ENCODE measurements at regions of chr12 and their contacts with region 1.

Region 1: DNA sequence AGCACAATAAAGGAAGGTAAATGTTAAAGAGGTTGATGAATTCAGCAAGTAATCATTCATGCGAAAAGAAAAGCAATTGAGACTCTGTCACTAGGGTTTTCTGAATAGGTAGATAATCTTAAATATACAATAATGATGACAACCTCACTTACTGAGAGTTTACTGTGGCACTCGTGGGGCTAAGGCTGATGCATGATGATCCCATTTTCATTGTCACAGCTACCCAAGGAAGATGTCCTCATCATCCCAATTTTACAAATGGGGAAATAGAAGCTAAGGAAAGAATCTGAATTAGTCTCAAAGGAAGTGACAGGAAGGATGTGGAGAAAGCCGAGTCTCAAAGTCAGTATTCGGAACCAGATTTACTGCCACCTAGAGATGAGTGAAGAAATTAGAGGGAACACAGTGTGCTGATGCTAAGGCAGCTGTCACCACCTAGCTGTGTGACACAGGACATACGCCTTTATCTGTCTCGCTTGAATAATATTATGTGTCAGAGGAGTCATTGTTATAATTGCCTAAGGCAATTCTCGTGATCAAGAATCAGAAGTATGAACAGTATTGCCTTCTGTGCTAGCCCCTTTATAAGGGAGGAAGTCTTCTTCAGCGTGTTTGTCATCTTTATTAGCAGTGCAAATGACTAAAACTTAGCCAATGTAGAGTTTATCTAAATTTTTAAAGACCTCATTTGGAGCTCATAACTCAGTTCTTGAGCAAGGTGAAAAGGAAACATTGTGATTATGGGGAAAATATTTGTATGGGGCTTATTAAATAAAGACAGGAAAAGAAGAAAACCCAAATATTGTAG is 63.2 kb downstream of the ERGIC2 start:
- DNase-seq: peak; percentile 68
- CTCF ChIP-seq: peak; percentile 86

Region 2: GRCh38 chr12:29073628-29074239 is 244.0 kb before region 1 on chr12:
- CTCF ChIA-PET with region 1: interaction called, 42 read pairs
- POLR2A ChIA-PET with region 1: no interaction called
- DNase-seq: peak; percentile 20
- CTCF ChIP-seq: peak; percentile 56

Region 3: DNA sequence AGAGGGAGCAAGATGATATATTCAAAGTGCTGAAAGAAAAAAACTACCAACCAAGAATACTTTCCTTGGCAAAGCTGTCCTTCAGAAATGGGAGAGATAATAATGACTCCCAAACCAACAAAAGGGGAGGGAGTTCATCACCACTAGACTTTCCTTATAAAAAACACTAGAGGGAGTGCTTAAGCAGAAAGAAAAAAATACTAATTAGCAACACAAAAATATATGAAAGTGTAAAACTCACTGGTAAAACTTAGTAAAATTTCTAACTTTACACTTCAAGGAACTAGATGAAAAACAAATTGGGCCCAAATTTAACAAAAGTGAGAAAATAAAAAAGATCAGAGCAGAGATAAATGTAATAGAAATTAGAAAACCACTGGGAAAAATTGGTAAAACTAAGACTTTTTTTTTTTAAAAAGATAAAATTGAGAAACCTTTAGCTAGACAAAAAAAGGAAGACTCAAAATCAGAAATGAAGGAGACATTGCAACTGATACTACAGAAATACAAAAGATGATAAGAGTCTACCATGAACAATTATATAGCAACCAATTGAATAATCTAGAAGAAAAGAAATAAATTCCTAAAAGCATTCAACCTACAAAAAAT is 229.0 kb before region 1 on chr12:
- CTCF ChIA-PET with region 1: interaction called, 14 read pairs
- POLR2A ChIA-PET with region 1: no interaction called
- DNase-seq: peak; percentile 21
- CTCF ChIP-seq: peak; percentile 35

Region 4: DNA sequence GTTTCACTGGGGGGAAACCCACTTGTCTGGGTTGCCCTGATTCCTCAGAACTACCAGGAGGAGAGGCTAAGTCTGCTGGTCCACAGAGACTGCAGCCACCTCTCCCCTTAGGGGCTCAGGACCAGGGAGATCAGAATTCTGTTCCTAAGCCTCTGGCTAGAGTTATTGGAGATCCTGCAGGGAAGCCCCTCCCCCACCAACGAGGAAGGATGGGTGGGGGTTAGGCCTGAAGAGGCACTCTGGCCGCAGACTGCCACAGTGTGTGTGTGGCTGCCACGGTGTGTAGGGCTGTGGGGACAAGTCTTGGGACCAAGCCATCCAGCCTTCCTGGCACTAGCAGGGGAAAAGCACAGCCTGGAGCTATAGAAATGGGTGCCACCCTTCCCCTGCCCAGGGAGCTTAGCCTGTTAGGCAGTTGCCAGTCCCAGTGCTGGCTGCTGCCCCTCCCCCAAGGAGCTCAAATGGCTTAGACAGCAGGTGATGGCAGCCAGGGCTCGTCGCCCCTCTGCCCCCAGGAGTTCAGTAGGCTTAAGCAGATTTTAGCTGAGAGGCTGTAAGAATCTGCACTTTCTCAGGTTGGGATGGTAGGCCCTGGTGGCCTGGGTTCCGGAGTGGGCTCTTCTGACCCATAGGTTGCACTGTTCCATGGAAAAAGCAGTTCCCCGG is 44.4 kb before region 1 on chr12:
- CTCF ChIA-PET with region 1: no interaction called
- POLR2A ChIA-PET with region 1: no interaction called
- DNase-seq: no peak
- CTCF ChIP-seq: no peak

Region 5: DNA sequence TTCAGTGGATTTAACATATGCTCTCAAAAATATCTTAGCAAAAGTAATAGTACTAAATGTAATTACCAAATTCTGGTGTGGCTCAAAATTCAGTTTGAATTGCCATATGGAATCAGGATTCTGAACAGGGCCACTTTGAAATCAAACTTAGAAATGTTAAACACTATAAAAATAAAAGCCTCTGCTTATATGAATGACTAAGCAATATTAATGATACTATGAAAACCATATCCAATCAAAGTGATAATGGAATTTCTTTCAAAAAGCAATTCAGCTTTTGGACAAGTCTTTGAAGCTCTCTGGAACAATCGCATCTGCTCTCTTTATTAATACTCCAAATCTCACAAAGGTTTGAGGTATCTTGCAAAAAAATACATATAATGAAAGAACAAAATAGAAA is 11.7 kb after region 1 on chr12:
- CTCF ChIA-PET with region 1: interaction called, 19 read pairs
- POLR2A ChIA-PET with region 1: no interaction called
- DNase-seq: no peak
- CTCF ChIP-seq: no peak

Region 6: GRCh38 chr12:29858270-29858786 is 540.6 kb after region 1 on chr12:
- CTCF ChIA-PET with region 1: no interaction called
- POLR2A ChIA-PET with region 1: no interaction called
- DNase-seq: no peak
- CTCF ChIP-seq: no peak

Measured in GM10248 (cell line).